ENCODE measurements at regions of chr13 and their contacts with region 1.

Region 1: DNA sequence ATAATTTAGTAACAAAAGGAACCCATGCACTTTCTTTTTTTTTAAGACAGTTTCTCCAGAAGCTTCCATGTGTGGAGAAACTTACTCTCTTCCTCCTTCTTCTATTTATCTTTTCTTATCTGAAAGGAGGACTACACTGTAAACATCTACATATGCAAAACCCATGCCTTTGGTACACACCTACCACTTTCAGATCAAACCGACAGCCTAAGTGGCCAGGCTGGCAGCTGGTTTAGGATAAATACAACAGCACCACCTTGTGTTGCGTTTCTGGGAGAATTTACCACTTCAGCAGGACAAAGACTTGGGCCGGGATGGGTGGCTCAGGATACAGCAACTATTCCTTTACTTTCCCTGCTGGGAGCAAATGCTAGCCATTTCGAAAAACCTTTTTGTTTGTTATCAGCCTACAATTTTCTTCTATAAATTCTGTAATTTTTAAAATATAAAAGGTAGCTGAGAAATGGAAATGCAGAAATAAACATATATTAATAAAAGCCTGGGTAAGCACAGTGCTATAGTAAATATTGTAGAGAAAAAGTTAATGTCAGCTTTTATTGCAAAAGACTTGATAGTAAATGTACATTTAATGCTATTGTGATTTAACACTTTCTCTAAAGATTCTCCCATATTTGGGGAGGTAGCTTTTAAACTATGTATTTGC is 94.0 kb upstream of the RFC3 start:
- DNase-seq: peak; percentile 75 to 76
- ATAC-seq: peak; percentile 98

Region 2: GRCh38 chr13:32645854-32646253 is 1078.0 kb before region 1 on chr13:
- intact Hi-C with region 1: loop called in 1 of 2 experiments (anchors 5 kb)
- DNase-seq: no peak
- ATAC-seq: no peak

Region 3: DNA sequence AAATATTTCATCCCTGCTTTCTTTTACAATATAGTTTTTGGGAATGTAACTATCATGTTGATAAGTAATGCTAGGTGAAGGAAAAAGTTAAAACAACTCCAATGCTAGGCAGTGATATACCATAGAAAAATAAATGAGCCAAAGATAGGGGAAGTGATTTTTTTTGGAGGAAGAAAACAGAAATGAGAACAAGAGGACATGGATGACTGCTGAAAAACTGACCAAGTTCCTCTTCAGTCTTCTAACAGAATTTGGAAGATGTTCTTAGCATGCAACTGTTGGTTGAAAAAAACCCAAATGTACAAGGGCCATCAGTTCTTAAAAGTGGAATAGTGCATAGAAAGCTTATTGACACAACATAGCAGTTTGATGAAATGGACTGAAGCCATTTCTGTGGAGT is 175.8 kb before region 1 on chr13:
- intact Hi-C with region 1: loop called in 1 of 2 experiments (anchors 5 kb)
- DNase-seq: no peak
- ATAC-seq: no peak

Measured in left colon (tissue), 2 donors.